Common myeloid progenitor, CD34-positive (primary cell): ENCODE measurements at regions of chr19 and their contacts with region 1.

Region 1: DNA sequence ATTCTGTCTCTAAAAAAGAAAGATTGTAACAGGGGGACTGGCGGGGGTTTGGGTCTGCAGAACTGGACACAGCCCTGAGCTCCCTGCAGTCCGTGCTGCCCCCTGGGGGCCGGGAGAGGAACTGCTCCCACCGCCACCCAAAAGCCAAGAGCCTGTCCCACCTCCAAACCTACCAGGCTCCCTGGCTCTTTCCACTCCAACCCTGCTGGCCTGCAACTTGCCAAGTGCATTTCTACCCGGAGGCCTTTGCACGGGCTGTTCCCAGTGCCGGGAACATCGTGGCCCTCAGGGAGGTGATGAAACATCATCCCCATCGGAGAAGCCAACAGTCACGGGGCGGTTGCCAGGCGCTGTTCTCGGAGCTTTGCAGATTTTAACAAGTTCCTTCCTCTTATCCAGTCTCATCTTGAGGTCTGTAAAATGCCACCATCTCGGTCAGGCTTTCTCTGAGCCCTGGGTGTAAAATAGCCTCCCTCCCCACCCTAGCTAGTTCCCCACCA is 50.7 kb downstream of the SMIM24 start:
- DNase-seq: peak; percentile 69 to 81 (median 80)
- H3K4me3 ChIP-seq: peak overlapping the region in 1 of 7 experiments; percentile 11
- H3K27ac ChIP-seq: no peak overlapping the region
- H3K4me1 ChIP-seq: peaks cover 0 to 18% (median 14%) of the 10 kb centered on the region in 4 experiments
- H3K27me3 ChIP-seq: no peaks in the 10 kb centered on the region

Region 2: DNA sequence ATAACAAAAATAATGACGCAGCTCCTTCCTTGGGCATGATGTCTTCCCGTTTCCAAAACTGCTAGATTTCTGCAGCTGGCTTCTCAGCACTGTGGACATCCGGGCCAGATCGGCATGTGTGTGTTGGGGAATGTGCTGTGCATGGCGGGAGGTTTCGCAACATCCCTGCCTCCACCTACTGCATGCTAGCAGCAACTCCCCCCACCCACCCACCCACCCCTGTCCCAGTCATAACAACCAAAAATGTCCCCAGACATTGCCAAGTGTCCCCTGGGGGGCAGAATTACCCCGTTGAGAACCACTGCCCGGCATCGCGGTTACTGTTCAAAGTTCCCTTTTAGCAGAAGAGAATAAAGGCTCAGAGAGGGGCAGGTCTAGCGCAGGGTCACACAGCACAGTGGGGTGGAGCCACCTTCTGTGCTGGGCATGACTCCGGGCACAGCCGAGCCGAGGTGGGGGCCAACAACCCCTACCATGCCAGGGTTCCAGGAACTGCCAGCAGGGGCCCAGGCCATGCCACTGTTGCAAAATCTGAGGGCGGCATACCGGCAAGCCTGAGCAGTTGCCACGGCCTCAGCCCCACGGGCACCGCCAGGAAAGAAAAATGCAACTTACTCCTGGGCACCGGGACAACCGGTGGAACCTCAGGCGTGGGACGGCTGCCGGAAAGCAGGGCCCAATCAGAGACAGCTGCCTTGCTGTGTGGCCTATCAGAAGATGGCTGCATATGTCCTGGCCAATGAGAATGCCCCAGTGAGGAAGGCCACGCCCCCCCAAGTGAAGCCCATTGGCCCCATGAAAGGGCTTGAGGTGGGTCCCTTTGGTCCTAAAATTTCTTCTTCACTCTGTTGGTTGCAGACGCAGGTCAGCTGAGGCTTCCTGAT is 85.8 kb before region 1 on chr19:
- CTCF ChIA-PET with region 1: interaction called, 22 read pairs
- POLR2A ChIA-PET with region 1: no interaction called
- DNase-seq: peak; percentile 83 to 94 (median 93)
- H3K4me3 ChIP-seq: peak overlapping the region in 1 of 7 experiments; percentile 48
- H3K27ac ChIP-seq: no peak overlapping the region
- H3K4me1 ChIP-seq: peaks cover 0 to 34% (median 23%) of the 10 kb centered on the region in 4 experiments
- H3K27me3 ChIP-seq: no peaks in the 10 kb centered on the region

Region 3: GRCh38 chr19:3378352-3379150 is 51.1 kb before region 1 on chr19:
- CTCF ChIA-PET with region 1: no interaction called
- POLR2A ChIA-PET with region 1: no interaction called
- DNase-seq: no peak
- H3K4me3 ChIP-seq: no peak overlapping the region
- H3K27ac ChIP-seq: no peak overlapping the region
- H3K4me1 ChIP-seq: peaks cover 0 to 9% (median 3%) of the 10 kb centered on the region in 4 experiments
- H3K27me3 ChIP-seq: no peaks in the 10 kb centered on the region

Region 4: DNA sequence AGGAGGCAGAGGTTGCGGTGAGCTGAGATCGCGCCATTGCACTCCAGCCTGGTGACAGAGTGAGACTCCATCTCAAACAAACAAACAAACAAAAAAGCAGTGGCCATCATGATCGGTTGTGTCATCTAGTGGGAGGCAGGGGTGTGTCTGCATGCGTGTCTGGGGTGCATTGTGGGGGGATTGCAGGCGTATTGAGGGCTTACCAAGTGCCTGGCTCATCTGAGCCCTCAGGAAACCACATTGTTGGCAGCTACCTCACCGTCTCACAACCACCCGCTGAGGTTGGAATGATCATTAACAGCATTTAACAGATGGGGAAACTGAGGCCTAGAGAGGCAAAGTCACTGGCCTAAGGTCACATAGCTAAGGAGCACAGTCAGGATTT is 32.8 kb before region 1 on chr19:
- CTCF ChIA-PET with region 1: interaction called, 10 read pairs
- POLR2A ChIA-PET with region 1: no interaction called
- DNase-seq: no peak
- H3K4me3 ChIP-seq: no peak overlapping the region
- H3K27ac ChIP-seq: no peak overlapping the region
- H3K4me1 ChIP-seq: no peaks in the 10 kb centered on the region
- H3K27me3 ChIP-seq: no peaks in the 10 kb centered on the region

Region 5: DNA sequence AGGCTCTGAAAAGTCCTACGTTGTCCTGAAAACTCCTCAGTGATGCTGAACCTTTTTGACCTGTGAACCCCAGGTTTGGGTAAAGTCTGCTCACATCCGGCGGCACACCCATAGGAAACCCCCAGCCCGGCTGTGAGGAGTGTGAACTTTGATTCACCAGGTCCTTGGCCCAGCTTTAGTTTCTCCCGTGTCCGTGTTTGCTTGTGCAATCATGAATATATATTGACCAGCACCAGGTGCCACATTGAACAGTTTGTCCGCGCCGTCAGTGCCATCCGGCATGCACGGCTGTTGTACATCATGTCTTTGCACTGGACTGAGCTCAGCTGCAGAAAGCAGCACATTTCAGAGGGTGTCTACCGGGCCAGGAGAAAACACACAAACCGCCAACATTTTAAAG is 18.0 kb before region 1 on chr19:
- CTCF ChIA-PET with region 1: interaction called, 10 read pairs
- POLR2A ChIA-PET with region 1: no interaction called
- DNase-seq: no peak
- H3K4me3 ChIP-seq: no peak overlapping the region
- H3K27ac ChIP-seq: no peak overlapping the region
- H3K4me1 ChIP-seq: peaks cover 0 to 2% (median under 1%) of the 10 kb centered on the region in 4 experiments
- H3K27me3 ChIP-seq: no peaks in the 10 kb centered on the region

Region 6: DNA sequence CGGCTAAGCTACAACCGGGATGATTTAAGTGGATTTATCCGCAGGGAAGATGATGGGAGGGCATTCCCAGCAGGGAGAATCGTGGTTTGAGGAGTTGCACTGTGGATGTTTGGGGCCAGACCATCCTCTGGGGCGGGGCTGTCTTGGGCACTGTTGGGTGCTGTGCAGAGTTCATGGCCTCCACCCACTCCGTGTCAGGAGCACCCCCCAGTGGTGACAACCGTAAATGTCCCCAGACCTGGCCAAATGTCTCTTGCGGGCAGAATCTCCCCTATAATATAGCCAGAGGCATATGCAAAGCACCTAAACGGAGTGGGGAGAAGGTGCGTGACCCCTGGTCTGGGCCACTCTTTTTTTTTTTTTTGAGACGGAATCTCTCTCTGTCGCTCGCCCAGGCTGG is 10.5 kb after region 1 on chr19:
- CTCF ChIA-PET with region 1: interaction called, 13 read pairs
- POLR2A ChIA-PET with region 1: no interaction called
- DNase-seq: peak; percentile 46 to 64 (median 55)
- H3K4me3 ChIP-seq: no peak overlapping the region
- H3K27ac ChIP-seq: no peak overlapping the region
- H3K4me1 ChIP-seq: peaks cover 0 to 20% (median 18%) of the 10 kb centered on the region in 4 experiments
- H3K27me3 ChIP-seq: no peaks in the 10 kb centered on the region

Region 7: DNA sequence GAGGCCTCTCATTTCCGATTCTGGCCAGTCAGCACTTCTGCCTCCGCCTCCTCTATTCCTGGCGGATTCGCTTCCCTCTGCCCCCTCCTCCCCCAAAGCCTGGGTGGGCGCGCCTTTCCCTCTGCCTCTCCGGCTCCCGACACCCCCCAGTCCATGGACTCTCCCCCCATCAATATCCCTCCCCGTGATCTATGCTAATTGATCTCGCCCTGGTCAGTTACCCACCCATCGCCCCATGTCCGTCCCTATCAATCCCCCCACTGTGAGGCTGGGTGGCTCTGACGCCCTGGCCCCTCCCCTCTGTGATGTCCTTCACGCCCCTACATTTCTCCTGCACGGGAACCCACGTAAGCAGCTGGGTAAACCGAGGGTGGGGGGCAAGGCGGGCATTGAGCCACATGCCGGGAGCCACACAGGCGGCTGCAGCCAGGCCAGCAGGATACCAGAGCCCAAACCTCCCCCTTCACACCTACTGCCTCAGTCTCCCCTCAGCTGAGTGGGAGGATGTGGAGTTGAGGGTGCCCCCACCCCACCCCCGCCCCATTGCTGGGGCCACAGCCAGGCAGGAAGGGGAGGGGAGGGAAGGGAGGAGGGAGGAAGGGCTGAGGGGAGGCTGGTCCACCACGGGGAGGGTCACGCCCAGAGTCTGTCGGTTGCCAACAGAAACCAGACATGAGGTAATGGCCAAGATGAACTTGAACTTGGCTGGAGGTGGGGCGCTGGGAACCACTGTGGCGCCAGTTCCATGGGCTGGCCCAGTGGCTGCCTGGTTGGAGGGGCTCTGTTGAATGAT is 29.7 kb after region 1 on chr19:
- CTCF ChIA-PET with region 1: no interaction called
- POLR2A ChIA-PET with region 1: no interaction called
- DNase-seq: peak; percentile 22 to 62 (median 22)
- H3K4me3 ChIP-seq: no peak overlapping the region
- H3K27ac ChIP-seq: peak overlapping the region in 1 of 2 experiments; percentile 5
- H3K4me1 ChIP-seq: peaks cover 0 to 11% (median 6%) of the 10 kb centered on the region in 4 experiments
- H3K27me3 ChIP-seq: no peaks in the 10 kb centered on the region

Region 8: GRCh38 chr19:3471954-3472655 is 42.5 kb after region 1 on chr19:
- CTCF ChIA-PET with region 1: interaction called, 11 read pairs
- POLR2A ChIA-PET with region 1: no interaction called
- DNase-seq: peak in 2 of 3 donors; percentile 41 to 52
- H3K4me3 ChIP-seq: no peak overlapping the region
- H3K27ac ChIP-seq: no peak overlapping the region
- H3K4me1 ChIP-seq: peaks cover 0 to 7% (median 3%) of the 10 kb centered on the region in 4 experiments
- H3K27me3 ChIP-seq: no peaks in the 10 kb centered on the region

Region 9: GRCh38 chr19:3606690-3607289 is 177.2 kb after region 1 on chr19 and contains the start of gene TBXA2R:
- CTCF ChIA-PET with region 1: no interaction called
- POLR2A ChIA-PET with region 1: no interaction called
- DNase-seq: peak in 2 of 3 donors; percentile 45 to 53
- H3K4me3 ChIP-seq: peak within 1 kb of the TSS; percentile 37 to 81 (median 72)
- H3K27ac ChIP-seq: peak within 1 kb of the TSS in 1 of 2 experiments; percentile 56
- H3K4me1 ChIP-seq: peaks cover 11 to 65% (median 63%) of the 10 kb centered on the region in 4 experiments
- H3K27me3 ChIP-seq: no peaks in the 10 kb centered on the region